WTC11 (cell line): ENCODE measurements at regions of chr7 and their contacts with region 1.

Region 1: DNA sequence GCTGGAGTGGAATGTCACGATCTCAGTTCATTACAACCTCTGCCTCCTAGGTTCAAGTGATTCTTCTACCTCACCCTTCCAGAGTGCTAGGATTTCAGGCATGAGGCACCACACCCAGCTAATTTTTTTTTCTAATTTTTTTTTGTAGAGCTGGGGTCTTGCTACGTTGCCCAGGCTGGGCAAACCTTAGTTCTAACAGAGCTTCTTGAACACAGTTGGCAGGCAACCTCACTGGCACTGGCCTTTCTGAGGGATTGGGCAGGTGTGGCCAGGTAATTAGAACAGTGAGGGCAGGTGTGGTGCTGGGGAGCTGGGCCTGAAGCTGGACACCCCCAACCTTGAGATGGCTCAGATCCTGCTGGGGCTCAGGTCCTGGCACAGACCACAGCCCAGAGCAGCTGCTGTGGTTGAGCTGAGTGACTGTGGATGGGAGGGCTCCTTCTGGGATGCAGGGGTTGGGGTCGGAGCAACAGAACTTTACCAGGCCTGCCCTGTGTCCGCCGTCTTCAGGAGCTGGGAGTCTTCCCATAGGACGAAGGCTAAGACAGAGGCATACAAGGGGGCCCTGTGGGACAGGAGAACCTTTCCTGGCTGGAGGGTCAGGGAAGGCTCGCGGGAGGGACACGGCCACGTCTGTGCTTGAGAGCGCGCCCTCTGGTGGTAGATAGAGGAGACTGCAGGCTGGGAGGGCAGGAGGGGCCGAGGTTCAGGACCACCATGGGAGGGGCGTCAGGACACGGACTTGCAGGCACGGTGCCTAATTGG is 48.2 kb downstream of the COL26A1 start:
- DNase-seq: peak; percentile 91
- ATAC-seq: peak; percentile 93
- H3K4me3 Mint-ChIP-seq: no peak overlapping the region
- H3K27ac Mint-ChIP-seq: peak overlapping the region; percentile 94
- H3K4me1 Mint-ChIP-seq: peaks cover 25% of the 10 kb centered on the region
- H3K27me3 Mint-ChIP-seq: no peaks in the 10 kb centered on the region
- CTCF ChIP-seq: peak; percentile 99

Region 2: DNA sequence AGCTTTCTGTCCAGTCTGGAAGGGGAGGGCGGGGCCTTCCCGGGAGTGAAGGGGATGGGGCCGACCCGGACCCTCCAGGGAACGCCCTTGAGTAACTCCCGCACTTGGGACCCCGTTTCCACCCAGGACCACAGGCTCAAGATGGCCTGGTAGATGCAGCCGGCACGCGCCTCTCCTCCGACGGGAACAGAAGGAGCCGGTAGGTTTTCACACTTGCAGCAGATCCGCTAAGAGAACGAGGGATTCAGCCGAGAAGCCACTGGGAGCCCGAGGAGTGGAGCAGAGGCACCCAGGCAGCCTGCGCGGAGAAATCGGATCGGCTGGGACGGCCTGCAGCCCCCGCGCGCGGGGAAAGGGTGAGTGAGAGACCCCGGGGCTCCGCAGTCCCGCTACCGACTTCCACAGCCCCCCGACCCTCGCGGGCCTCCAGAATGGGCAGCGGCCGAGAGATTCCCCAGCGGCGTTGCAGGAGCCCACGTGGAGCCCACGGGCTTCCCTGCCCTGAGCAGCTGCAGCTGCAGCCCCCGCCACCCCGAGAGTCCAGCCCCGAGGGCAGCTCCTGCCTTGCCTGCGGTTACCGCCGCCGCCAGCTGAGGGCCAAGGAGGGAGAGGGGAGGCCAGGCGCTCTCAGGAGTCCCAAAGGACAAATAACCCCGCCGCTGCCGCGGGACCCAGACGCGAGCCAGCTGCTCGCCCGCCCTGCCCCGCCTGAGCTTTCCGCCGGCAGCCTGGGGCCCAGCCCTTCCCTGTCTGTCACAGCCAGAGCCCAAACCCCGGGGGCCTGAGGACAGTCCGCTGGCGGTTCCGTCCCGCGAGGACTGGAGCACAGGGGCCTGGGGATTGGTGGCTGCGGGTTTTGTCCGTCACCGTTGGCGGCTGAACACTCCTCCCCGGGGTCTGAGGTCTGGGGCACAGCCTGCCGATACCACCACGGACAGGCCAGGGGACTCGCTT is 111.1 kb before region 1 on chr7:
- CTCF ChIA-PET with region 1: no interaction called
- POLR2A ChIA-PET with region 1: no interaction called
- DNase-seq: peak; percentile 70
- ATAC-seq: peak; percentile 38
- H3K4me3 Mint-ChIP-seq: peak overlapping the region; percentile 81
- H3K27ac Mint-ChIP-seq: peak overlapping the region; percentile 96
- H3K4me1 Mint-ChIP-seq: peaks cover 55% of the 10 kb centered on the region
- H3K27me3 Mint-ChIP-seq: no peaks in the 10 kb centered on the region
- CTCF ChIP-seq: no peak

Region 3: DNA sequence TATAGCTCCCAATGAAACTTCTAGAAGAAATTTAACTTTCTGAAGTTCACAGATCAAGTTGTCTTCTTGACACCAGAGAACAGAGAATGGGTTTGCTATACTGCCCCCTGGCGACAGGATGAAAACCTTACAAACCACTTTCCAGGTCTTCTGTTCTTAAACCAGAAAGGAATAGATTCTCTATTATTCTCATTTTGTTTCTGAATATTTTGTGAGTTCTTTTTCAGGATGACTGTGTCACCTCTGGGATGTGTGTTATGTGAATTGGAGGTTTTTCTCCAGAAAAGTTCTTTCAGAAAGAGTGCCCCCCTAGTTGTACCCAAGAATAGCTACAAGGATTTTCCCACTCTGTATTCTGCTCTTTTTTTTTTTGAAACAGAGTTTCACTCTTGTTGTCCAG is 95.6 kb before region 1 on chr7:
- CTCF ChIA-PET with region 1: interaction called, 11 read pairs
- POLR2A ChIA-PET with region 1: interaction called, 3 read pairs
- DNase-seq: peak; percentile 72
- ATAC-seq: peak; percentile 37
- H3K4me3 Mint-ChIP-seq: no peak overlapping the region
- H3K27ac Mint-ChIP-seq: peak overlapping the region; percentile 92
- H3K4me1 Mint-ChIP-seq: peaks cover 19% of the 10 kb centered on the region
- H3K27me3 Mint-ChIP-seq: no peaks in the 10 kb centered on the region
- CTCF ChIP-seq: peak; percentile 74

Region 4: GRCh38 chr7:101363734-101364374 is 47.1 kb before region 1 on chr7:
- CTCF ChIA-PET with region 1: interaction called, 55 read pairs
- POLR2A ChIA-PET with region 1: interaction called, 5 read pairs
- DNase-seq: peak; percentile 75
- ATAC-seq: peak; percentile 79
- H3K4me3 Mint-ChIP-seq: peak overlapping the region; percentile 62
- H3K27ac Mint-ChIP-seq: no peak overlapping the region
- H3K4me1 Mint-ChIP-seq: peaks cover 28% of the 10 kb centered on the region
- H3K27me3 Mint-ChIP-seq: peaks cover 6% of the 10 kb centered on the region; the same call in 1 of the 2 replicates
- CTCF ChIP-seq: peak; percentile 91

Region 5: DNA sequence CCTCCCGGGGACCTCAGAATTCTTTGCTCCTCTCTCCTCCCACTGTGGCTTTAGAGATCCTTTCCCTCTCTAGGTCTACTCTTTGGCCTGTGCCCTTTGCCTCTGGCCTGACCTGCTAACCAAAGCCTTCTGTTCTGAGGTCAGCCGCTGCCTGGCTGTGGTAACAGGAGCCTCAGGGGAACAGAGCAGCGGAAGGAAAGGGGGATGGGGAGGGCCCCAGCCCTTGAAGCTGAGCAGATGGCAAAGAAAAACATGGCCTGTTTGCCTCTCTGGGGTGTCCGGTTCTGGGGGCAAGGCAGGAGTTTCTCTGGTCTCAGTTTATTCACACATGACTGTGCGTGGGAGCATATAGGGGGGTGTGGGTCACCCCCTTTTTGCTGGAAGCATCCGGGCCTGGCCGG is 20.0 kb before region 1 on chr7:
- CTCF ChIA-PET with region 1: interaction called, 18 read pairs
- POLR2A ChIA-PET with region 1: interaction called, 3 read pairs
- DNase-seq: peak; percentile 56
- ATAC-seq: peak; percentile 76
- H3K4me3 Mint-ChIP-seq: no peak overlapping the region
- H3K27ac Mint-ChIP-seq: peak overlapping the region; percentile 82
- H3K4me1 Mint-ChIP-seq: peaks cover 41% of the 10 kb centered on the region
- H3K27me3 Mint-ChIP-seq: no peaks in the 10 kb centered on the region
- CTCF ChIP-seq: no peak

Region 6: DNA sequence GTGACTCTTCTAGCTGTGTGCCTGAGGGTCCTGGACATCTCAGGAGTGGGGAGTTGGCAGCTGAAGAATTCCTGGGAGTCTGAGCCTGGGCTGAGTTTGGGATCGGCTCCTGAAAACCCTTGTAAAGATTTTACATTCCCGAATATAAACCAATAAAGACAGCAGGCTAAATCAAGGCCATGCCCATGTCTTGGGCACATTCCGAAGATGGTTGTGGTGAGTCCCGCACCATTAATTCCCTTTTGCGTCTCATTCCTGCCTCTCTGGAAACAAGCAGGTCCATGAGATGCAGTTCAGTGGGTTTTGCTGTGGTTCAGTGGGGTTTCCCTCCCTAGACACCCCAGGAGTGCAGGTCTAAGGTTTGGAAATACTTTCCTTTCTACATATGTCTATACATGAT is 42.7 kb after region 1 on chr7:
- CTCF ChIA-PET with region 1: no interaction called
- POLR2A ChIA-PET with region 1: no interaction called
- DNase-seq: no peak
- ATAC-seq: no peak
- H3K4me3 Mint-ChIP-seq: no peak overlapping the region
- H3K27ac Mint-ChIP-seq: no peak overlapping the region
- H3K4me1 Mint-ChIP-seq: no peaks in the 10 kb centered on the region
- H3K27me3 Mint-ChIP-seq: no peaks in the 10 kb centered on the region
- CTCF ChIP-seq: no peak

Region 7: DNA sequence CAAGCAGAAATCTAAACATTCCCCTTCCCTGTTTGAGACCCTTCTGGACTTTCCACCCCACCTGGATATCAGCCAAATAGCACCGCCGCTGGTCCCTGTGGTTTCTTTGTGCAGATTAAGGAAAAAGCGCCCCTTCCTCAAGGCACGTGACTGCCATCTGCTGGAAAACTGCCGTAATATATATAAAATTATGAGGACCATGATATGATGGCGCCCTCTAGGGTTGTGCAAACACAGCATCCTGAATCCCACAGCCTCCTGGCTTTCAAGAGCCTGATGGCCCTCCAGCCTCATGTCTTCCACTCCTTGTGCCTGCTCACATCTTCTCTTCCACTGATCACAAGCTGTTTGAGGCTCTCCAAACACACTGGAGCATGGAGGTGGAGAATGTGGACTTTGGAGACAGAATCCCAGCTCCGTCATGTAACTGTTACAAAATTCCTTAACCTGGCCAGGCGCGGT is 96.9 kb after region 1 on chr7:
- CTCF ChIA-PET with region 1: interaction called, 10 read pairs
- POLR2A ChIA-PET with region 1: no interaction called
- DNase-seq: peak; percentile 74
- ATAC-seq: peak; percentile 68
- H3K4me3 Mint-ChIP-seq: peak overlapping the region; percentile 24
- H3K27ac Mint-ChIP-seq: peak overlapping the region; percentile 18
- H3K4me1 Mint-ChIP-seq: peaks cover 37% of the 10 kb centered on the region
- H3K27me3 Mint-ChIP-seq: no peaks in the 10 kb centered on the region
- CTCF ChIP-seq: peak; percentile 81

Region 8: GRCh38 chr7:101519324-101520023 is 108.5 kb after region 1 on chr7:
- CTCF ChIA-PET with region 1: no interaction called
- POLR2A ChIA-PET with region 1: no interaction called
- DNase-seq: no peak
- ATAC-seq: no peak
- H3K4me3 Mint-ChIP-seq: no peak overlapping the region
- H3K27ac Mint-ChIP-seq: no peak overlapping the region
- H3K4me1 Mint-ChIP-seq: peaks cover 18% of the 10 kb centered on the region
- H3K27me3 Mint-ChIP-seq: no peaks in the 10 kb centered on the region
- CTCF ChIP-seq: no peak

Region 9: GRCh38 chr7:101542527-101543241 is 131.8 kb after region 1 on chr7:
- CTCF ChIA-PET with region 1: no interaction called
- POLR2A ChIA-PET with region 1: no interaction called
- DNase-seq: peak; percentile 95
- ATAC-seq: peak; percentile 69
- H3K4me3 Mint-ChIP-seq: no peak overlapping the region
- H3K27ac Mint-ChIP-seq: no peak overlapping the region; the same call in 1 of the 2 replicates
- H3K4me1 Mint-ChIP-seq: peaks cover 4% of the 10 kb centered on the region; the same call in 1 of the 2 replicates
- H3K27me3 Mint-ChIP-seq: no peaks in the 10 kb centered on the region
- CTCF ChIP-seq: peak; percentile 96